ENCODE measurements at regions of chr17 and their contacts with region 1.

Region 1: DNA sequence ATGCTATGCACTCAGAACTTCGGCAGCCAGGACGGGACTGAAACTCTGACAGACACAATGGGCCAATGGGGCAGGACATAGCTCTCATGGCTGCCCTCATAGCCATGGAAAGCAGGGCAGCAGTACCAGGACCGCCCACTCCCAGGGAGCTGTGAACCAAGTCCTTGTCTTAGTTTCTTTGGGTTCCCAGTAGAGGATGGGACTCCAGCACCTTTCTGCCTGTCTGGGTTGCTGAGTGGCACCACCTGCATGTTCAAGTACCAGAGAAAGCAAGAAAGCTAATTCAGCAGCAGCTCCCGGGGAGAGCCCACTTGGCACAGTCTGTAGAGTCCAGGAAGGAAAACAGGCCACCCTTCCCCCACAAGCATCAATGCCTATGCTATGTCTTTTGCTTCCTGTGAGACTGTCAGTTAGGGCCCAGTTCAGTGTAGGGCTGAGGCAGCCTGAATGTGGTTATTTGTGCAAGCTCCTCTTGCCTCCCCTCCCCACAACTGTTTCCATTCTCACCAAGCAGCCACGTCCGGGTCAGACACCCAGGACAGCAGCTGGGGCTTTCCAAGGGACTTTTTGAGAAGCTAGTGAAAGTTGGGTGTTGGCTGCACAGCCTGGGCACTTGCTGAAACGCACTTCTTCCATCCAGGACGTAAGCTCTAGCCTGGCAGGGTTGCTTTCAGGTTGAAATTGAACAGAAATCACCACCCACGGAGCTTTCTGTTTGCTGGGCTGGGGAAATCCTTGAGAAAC is 7.8 kb downstream of the SUPT4H1 start:
- DNase-seq: peak; percentile 91
- H3K4me3 Mint-ChIP-seq: peak overlapping the region; percentile 100
- H3K27ac Mint-ChIP-seq: peak overlapping the region; percentile 98
- H3K4me1 Mint-ChIP-seq: peaks cover 80% of the 10 kb centered on the region
- H3K27me3 Mint-ChIP-seq: peaks cover 2% of the 10 kb centered on the region

Region 2: DNA sequence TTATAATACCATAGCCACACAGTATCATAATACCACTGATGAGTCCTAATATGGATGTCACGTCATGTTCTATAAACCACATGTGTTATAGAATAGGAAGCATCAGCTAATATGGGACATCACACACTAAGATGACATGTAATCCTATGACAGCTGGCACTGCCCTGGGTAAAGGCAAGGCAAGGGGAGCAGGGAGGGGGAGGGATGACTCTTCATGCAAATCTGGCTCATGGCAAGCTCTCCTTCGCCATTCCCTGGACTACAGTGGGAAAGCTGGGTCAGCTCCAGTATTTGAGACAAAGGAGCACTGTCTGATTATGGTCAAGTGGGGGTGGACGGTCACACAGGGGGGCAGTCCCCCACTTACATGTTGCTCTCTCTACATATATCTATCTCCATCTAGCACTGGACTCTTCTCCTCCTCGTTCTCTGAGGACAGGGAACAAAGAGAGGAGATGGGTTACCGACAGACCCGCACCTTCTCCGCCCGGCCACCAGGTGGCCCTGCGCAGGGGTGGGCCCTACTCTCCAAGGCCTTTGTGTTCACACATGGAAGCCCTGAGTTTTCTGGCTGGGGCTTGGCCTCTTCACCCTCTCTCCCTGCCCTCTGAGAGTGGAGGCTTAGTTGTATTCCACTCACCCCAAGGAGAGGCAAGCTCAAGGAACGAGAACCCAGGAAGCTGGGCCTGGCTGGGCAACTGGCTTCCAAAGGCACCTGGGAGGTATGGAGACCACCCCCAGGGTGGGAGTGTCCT is 40.1 kb before region 1 on chr17:
- intact Hi-C with region 1: loop called (anchors 1 kb)
- DNase-seq: peak; percentile 42
- H3K4me3 Mint-ChIP-seq: no peak overlapping the region
- H3K27ac Mint-ChIP-seq: no peak overlapping the region
- H3K4me1 Mint-ChIP-seq: peaks cover 6% of the 10 kb centered on the region
- H3K27me3 Mint-ChIP-seq: no peaks in the 10 kb centered on the region

Region 3: GRCh38 chr17:58329035-58329809 is 15.0 kb before region 1 on chr17:
- intact Hi-C with region 1: loop called (anchors 1 kb)
- DNase-seq: peak; percentile 81
- H3K4me3 Mint-ChIP-seq: peak overlapping the region; percentile 100
- H3K27ac Mint-ChIP-seq: peak overlapping the region; percentile 93
- H3K4me1 Mint-ChIP-seq: peaks cover 45% of the 10 kb centered on the region
- H3K27me3 Mint-ChIP-seq: peaks cover 2% of the 10 kb centered on the region

Region 4: DNA sequence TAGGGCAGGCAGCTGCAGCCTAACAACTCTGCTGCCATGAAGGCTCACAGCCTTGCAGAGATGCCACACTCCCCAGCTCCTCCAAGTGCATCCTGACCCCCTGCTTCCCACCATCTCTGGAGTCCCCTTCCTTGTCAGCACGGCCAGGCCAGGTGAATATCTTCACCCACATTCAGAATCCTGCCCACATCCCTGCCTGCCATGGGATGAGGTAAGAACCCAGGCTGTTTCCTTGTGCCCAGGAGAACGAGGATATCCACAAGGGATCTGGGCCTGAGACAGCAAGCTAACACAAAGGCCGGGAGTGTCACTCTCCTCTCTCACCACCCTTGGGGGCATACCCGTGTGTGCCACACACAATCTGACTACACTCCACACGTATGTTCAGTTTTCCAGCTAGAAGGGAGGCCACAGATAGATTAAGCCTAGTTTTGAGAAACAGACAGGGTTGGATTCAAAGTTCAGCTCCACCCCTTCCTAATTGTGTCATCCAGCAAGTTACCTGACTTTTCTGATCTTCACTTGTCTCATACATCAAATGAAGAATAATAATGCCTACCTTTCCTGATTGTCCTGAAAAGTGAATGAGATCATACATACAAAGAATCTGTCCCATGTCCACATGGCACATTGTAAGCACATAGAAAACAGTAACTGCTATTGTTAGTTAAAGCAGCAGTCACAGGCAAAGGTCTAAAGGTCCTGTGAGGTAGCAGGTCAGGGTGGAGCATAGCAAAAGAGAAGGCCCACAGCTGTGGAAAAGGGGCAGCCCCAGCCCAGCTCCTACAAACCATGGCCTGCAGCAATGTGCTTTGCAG is 25.2 kb after region 1 on chr17:
- intact Hi-C with region 1: no loop called
- DNase-seq: no peak
- H3K4me3 Mint-ChIP-seq: no peak overlapping the region
- H3K27ac Mint-ChIP-seq: no peak overlapping the region
- H3K4me1 Mint-ChIP-seq: peaks cover 9% of the 10 kb centered on the region
- H3K27me3 Mint-ChIP-seq: no peaks in the 10 kb centered on the region

Region 5: GRCh38 chr17:58417300-58418092 is 73.3 kb after region 1 on chr17 and contains the start of gene RNF43:
- intact Hi-C with region 1: loop called (anchors 1 kb)
- DNase-seq: peak; percentile 75
- H3K4me3 Mint-ChIP-seq: peak within 1 kb of the TSS; percentile 2
- H3K27ac Mint-ChIP-seq: peak within 1 kb of the TSS; percentile 47
- H3K4me1 Mint-ChIP-seq: peaks cover 28% of the 10 kb centered on the region
- H3K27me3 Mint-ChIP-seq: peaks cover 7% of the 10 kb centered on the region
- total RNA-seq, gene RNF43: 0.47 and 0.86 TPM in 2 replicates